ENCODE measurements at regions of chr5 and their contacts with region 1.

Region 1: DNA sequence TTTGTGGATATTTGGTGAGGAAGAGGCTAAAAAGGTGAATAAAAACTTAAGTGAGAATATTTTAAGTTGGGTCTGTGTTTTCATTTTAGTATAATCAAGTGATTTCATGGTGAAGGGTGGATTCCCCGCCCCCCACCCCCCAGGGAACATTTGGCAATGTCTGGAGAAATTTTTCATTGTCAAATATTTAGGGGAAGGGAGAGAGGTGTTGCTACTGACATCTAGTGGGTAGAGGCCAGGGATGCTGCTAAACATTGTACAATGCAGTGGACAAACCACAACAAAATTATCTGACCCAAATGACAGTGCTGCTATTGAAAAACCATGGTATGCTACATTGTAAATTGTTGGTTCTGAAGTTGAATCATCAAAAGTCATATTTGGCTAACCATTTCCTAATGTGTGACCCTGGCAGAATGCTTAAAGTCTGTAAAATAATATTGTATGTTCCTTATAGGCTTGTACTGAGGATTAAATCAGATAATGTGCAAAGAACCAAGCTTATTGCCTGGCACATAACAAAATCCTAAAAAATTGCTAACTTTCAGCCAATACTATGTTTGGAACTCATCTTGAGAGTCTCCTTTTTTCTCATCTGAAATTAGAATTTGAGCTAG is 5.6 kb downstream of the C5orf24 start:
- DNase-seq: no peak
- H3K4me3 ChIP-seq: no peak overlapping the region
- H3K27ac ChIP-seq: peak overlapping the region; percentile 57
- H3K27me3 ChIP-seq: no peaks in the 10 kb centered on the region
- CTCF ChIP-seq: peak; percentile 63

Region 2: GRCh38 chr5:134864707-134865106 is 13.3 kb after region 1 on chr5:
- CTCF ChIA-PET with region 1: interaction called, 13 read pairs
- POLR2A ChIA-PET with region 1: interaction called, 15 read pairs
- DNase-seq: no peak
- H3K4me3 ChIP-seq: no peak overlapping the region
- H3K27ac ChIP-seq: no peak overlapping the region
- H3K27me3 ChIP-seq: no peaks in the 10 kb centered on the region
- CTCF ChIP-seq: no peak

Region 3: GRCh38 chr5:134873987-134874830 is 22.8 kb after region 1 on chr5 and contains the start of gene TXNDC15:
- CTCF ChIA-PET with region 1: no interaction called
- POLR2A ChIA-PET with region 1: interaction called, 16 read pairs
- DNase-seq: peak; percentile 51
- H3K4me3 ChIP-seq: peak within 1 kb of the TSS; percentile 91
- H3K27ac ChIP-seq: peak within 1 kb of the TSS; percentile 94
- H3K27me3 ChIP-seq: no peaks in the 10 kb centered on the region
- CTCF ChIP-seq: no peak
- polyA plus RNA-seq, gene TXNDC15: 102 and 109 TPM in 2 replicates

Region 4: DNA sequence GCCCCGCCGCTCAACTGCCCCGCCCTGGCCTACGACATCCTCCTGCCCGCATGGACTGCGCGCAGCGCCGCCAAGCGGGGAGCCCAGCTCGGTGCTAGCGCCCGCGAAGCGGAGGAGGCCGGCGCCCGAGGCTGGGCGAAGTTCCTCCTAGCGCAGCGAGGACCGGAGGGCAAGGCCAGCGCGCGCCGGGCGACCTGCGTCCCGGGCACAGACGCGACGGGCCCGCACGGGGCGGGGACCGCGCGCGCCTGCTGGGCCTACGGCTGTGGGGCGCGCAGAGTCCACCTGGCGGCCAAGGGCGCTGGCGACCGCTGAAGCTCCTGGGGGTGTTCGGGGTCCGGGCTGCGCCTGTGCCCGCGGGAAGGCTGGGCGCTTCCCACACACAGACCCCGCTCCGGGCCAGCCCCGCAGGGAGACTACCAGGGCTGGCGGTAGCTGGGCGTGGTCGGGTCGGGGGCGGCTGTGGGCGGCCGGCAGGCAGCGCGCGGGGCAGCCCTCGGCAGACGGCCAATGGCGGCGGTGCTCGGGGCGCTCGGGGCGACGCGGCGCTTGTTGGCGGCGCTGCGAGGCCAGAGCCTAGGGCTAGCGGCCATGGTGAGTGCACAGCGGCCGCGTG is 53.3 kb after region 1 on chr5 and contains the start of gene PCBD2:
- CTCF ChIA-PET with region 1: interaction called, 10 read pairs
- POLR2A ChIA-PET with region 1: interaction called, 4 read pairs
- DNase-seq: peak; percentile 67
- H3K4me3 ChIP-seq: peak within 1 kb of the TSS; percentile 76
- H3K27ac ChIP-seq: peak within 1 kb of the TSS; percentile 82
- H3K27me3 ChIP-seq: no peaks in the 10 kb centered on the region
- CTCF ChIP-seq: peak; percentile 76
- polyA plus RNA-seq, gene PCBD2: 4.5 and 4.8 TPM in 2 replicates

Region 5: DNA sequence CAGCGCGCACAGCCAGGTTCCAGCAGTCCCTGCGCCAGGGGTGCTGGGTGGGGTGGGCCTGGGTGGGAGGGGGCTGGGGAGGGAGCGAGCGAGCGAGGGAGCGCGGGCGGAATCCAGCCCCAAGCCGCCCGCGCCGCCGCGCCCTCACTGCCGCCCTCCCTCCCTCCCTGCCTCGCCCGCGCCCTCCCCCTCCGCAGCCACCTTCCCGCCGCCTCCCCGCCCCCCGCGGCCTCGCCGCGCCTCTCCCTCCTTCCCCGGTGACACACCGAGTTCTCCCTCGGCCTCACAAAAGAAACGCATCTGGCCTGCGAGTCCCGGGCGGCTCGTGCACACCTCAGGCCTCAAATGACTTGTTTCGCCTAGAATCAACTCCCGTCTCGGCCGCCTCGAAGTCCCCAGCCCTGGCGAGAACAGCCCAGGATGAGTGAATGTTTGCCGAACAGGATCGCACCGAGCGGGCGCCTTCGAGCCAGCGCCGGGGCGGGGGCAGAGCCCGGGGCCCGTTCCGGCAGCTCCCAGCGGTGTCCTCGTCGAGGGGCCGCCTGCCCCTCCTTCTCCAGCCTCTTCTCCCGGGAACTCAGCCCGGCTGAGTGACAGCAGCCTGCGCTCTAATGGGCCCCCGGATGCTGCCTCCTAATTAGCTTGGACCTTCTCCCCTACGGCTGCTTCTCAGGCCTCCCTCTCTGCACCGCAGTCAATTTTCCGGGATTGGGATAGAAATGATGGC is 183.0 kb after region 1 on chr5:
- CTCF ChIA-PET with region 1: no interaction called
- POLR2A ChIA-PET with region 1: no interaction called
- DNase-seq: peak; percentile 53
- H3K4me3 ChIP-seq: peak overlapping the region; percentile 89
- H3K27ac ChIP-seq: peak overlapping the region; percentile 80
- H3K27me3 ChIP-seq: peaks cover 31% of the 10 kb centered on the region
- CTCF ChIP-seq: no peak

Measured in AG04450 (cell line).